MCF 10A (cell line): ENCODE measurements at regions of chr18 and their contacts with region 1.

Region 1: GRCh38 chr18:11654736-11655605 is 34.1 kb upstream of the GNAL start:
- DNase-seq: peak; percentile 67
- H3K4me3 Mint-ChIP-seq: peak overlapping the region; percentile 24
- H3K27ac Mint-ChIP-seq: no peak overlapping the region
- H3K4me1 Mint-ChIP-seq: peaks cover 27% of the 10 kb centered on the region
- H3K27me3 Mint-ChIP-seq: no peaks in the 10 kb centered on the region
- CTCF ChIP-seq: peak; percentile 88

Region 2: GRCh38 chr18:11482271-11482670 is 172.7 kb before region 1 on chr18:
- CTCF ChIA-PET with region 1: no interaction called
- POLR2A ChIA-PET with region 1: no interaction called
- intact Hi-C with region 1: no loop called
- DNase-seq: no peak
- H3K4me3 Mint-ChIP-seq: no peak overlapping the region
- H3K27ac Mint-ChIP-seq: no peak overlapping the region
- H3K4me1 Mint-ChIP-seq: no peaks in the 10 kb centered on the region
- H3K27me3 Mint-ChIP-seq: peaks cover 16% of the 10 kb centered on the region
- CTCF ChIP-seq: no peak

Region 3: GRCh38 chr18:11577271-11578112 is 77.5 kb before region 1 on chr18:
- CTCF ChIA-PET with region 1: no interaction called
- POLR2A ChIA-PET with region 1: no interaction called
- intact Hi-C with region 1: no loop called
- DNase-seq: no peak
- H3K4me3 Mint-ChIP-seq: no peak overlapping the region
- H3K27ac Mint-ChIP-seq: no peak overlapping the region
- H3K4me1 Mint-ChIP-seq: no peaks in the 10 kb centered on the region
- H3K27me3 Mint-ChIP-seq: peaks cover 24% of the 10 kb centered on the region
- CTCF ChIP-seq: no peak

Region 4: DNA sequence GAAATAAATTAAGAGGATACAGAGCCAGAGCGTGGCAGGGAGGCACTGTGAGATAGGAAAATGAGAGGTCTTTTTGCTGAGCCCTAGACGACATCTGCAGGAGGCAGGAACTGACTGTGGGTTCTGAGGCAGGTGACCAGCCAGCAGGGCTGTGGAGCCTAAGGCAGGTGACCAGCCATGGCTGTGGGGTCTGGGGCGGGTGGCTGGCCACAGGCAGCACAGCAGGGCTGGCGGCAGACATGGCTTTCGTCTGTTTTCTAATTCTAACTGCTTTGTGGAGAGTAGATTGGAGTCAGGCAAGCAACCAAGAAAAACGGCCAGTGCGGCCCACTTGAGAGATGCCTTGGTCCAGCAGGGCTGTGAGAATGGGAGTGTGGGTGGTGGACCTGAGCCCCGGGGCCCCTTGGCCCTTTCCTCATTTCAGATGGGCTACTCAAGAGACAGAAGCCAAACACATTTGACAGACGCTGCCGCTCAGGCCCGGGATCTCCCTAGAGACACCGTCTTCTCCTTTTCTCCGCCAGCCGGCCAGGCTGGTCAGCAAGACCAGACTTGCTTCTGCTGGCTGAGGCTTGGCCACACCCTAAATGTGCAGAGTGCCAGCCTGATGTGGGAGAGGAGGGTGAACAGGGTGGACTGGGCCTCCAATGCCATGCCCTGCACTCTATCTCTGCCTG is 14.4 kb after region 1 on chr18:
- CTCF ChIA-PET with region 1: interaction called, 33 read pairs
- POLR2A ChIA-PET with region 1: interaction called, 5 read pairs
- intact Hi-C with region 1: no loop called
- DNase-seq: peak; percentile 85
- H3K4me3 Mint-ChIP-seq: peak overlapping the region; percentile 2
- H3K27ac Mint-ChIP-seq: no peak overlapping the region
- H3K4me1 Mint-ChIP-seq: peaks cover 28% of the 10 kb centered on the region
- H3K27me3 Mint-ChIP-seq: no peaks in the 10 kb centered on the region
- CTCF ChIP-seq: no peak

Region 5: GRCh38 chr18:11695736-11696135 is 40.8 kb after region 1 on chr18:
- CTCF ChIA-PET with region 1: interaction called, 12 read pairs
- POLR2A ChIA-PET with region 1: no interaction called
- intact Hi-C with region 1: no loop called
- DNase-seq: no peak
- H3K4me3 Mint-ChIP-seq: no peak overlapping the region
- H3K27ac Mint-ChIP-seq: no peak overlapping the region
- H3K4me1 Mint-ChIP-seq: no peaks in the 10 kb centered on the region
- H3K27me3 Mint-ChIP-seq: no peaks in the 10 kb centered on the region
- CTCF ChIP-seq: no peak

Region 6: GRCh38 chr18:11721720-11722119 is 66.7 kb after region 1 on chr18:
- CTCF ChIA-PET with region 1: interaction called, 347 read pairs
- POLR2A ChIA-PET with region 1: interaction called, 4 read pairs
- intact Hi-C with region 1: no loop called
- DNase-seq: no peak
- H3K4me3 Mint-ChIP-seq: no peak overlapping the region
- H3K27ac Mint-ChIP-seq: no peak overlapping the region
- H3K4me1 Mint-ChIP-seq: peaks cover 4% of the 10 kb centered on the region
- H3K27me3 Mint-ChIP-seq: no peaks in the 10 kb centered on the region
- CTCF ChIP-seq: no peak

Region 7: GRCh38 chr18:11741505-11742145 is 86.7 kb after region 1 on chr18:
- CTCF ChIA-PET with region 1: interaction called, 347 read pairs
- POLR2A ChIA-PET with region 1: interaction called, 5 read pairs
- intact Hi-C with region 1: no loop called
- DNase-seq: peak; percentile 40
- H3K4me3 Mint-ChIP-seq: no peak overlapping the region
- H3K27ac Mint-ChIP-seq: no peak overlapping the region
- H3K4me1 Mint-ChIP-seq: no peaks in the 10 kb centered on the region
- H3K27me3 Mint-ChIP-seq: peaks cover 33% of the 10 kb centered on the region
- CTCF ChIP-seq: peak; percentile 48

Region 8: GRCh38 chr18:11872479-11873136 is 217.6 kb after region 1 on chr18:
- CTCF ChIA-PET with region 1: interaction called, 39 read pairs
- POLR2A ChIA-PET with region 1: interaction called, 3 read pairs
- intact Hi-C with region 1: loop called (anchors 5 kb)
- DNase-seq: peak; percentile 73
- H3K4me3 Mint-ChIP-seq: no peak overlapping the region
- H3K27ac Mint-ChIP-seq: no peak overlapping the region
- H3K4me1 Mint-ChIP-seq: no peaks in the 10 kb centered on the region
- H3K27me3 Mint-ChIP-seq: no peaks in the 10 kb centered on the region
- CTCF ChIP-seq: peak; percentile 62

Region 9: GRCh38 chr18:12038639-12039417 is 383.9 kb after region 1 on chr18:
- CTCF ChIA-PET with region 1: interaction called, 13 read pairs
- POLR2A ChIA-PET with region 1: interaction called, 3 read pairs
- intact Hi-C with region 1: no loop called
- DNase-seq: peak; percentile 70
- H3K4me3 Mint-ChIP-seq: peak overlapping the region; percentile 71
- H3K27ac Mint-ChIP-seq: no peak overlapping the region
- H3K4me1 Mint-ChIP-seq: peaks cover 16% of the 10 kb centered on the region
- H3K27me3 Mint-ChIP-seq: no peaks in the 10 kb centered on the region
- CTCF ChIP-seq: peak; percentile 98